ENCODE measurements at regions of chr13 and their contacts with region 1.

Region 1: DNA sequence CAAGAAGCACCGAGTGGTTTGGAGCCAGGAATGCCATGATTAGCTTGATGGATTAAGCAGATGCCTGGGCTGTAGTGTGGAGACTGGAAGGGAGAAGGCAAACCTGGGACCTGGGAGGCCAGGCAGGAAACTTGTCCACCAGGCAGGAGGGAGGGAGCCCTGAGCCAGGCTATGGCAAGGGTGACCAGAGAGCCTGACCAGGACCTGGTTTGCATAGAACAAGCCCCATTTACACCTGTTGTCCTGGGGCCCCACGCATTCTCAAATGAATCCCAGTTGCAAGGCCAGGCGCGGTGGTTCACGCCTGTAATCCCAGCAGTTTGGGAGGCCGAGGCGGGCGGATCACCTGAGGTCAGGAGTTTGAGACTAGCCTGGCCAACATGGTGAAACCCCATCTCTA is 50.2 kb upstream of the LATS2 start:
- DNase-seq: no peak
- H3K4me3 ChIP-seq: no peak overlapping the region
- H3K27ac ChIP-seq: no peak overlapping the region
- H3K4me1 ChIP-seq: no peaks in the 10 kb centered on the region
- CTCF ChIP-seq: no peak

Region 2: DNA sequence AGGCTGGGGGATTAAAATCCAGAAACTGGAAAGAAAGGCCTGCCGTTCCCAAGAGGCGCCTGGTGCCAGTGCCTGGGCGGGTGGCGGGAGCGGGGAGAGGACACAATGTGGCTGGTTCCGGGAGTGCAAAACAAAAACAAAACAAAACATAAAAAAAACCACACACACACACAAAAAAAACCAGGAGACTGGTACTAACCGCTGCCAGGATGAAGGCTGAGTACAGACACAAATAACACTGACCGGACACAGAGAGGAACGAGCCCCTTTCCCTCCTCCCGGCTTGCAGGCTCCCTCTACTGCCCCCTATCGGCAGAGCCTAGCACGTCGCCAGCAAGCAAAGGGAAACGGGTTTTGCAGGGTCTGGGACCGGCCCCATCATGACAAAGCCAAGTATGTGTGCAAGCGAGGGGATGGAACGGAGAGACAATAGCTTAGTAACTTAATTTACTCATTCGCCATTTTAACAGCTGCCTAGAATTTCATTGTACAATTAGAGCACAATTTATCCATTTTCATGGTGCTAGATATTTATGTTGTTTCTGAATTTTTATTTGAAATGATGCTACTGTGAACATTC is 365.4 kb after region 1 on chr13:
- CTCF ChIA-PET with region 1: interaction called, 4 read pairs
- POLR2A ChIA-PET with region 1: no interaction called
- intact Hi-C with region 1: loop called (anchors 2 kb)
- DNase-seq: peak; percentile 81
- H3K4me3 ChIP-seq: peak overlapping the region; percentile 55
- H3K27ac ChIP-seq: no peak overlapping the region
- H3K4me1 ChIP-seq: no peaks in the 10 kb centered on the region
- CTCF ChIP-seq: peak; percentile 95